ENCODE measurements at regions of chr6 and their contacts with region 1.

Region 1: GRCh38 chr6:72411872-72412708 is 209.8 kb upstream of the KCNQ5 start:
- DNase-seq: peak; percentile 72
- H3K4me3 ChIP-seq: no peak overlapping the region
- H3K27ac ChIP-seq: no peak overlapping the region
- H3K4me1 ChIP-seq: no peaks in the 10 kb centered on the region
- H3K27me3 ChIP-seq: no peaks in the 10 kb centered on the region
- CTCF ChIP-seq: peak in 4 of 5 experiments; percentile 99 to 100 (median 100)
- EP300 ChIP-seq: no peak
- POLR2A ChIP-seq: no peak

Region 2: DNA sequence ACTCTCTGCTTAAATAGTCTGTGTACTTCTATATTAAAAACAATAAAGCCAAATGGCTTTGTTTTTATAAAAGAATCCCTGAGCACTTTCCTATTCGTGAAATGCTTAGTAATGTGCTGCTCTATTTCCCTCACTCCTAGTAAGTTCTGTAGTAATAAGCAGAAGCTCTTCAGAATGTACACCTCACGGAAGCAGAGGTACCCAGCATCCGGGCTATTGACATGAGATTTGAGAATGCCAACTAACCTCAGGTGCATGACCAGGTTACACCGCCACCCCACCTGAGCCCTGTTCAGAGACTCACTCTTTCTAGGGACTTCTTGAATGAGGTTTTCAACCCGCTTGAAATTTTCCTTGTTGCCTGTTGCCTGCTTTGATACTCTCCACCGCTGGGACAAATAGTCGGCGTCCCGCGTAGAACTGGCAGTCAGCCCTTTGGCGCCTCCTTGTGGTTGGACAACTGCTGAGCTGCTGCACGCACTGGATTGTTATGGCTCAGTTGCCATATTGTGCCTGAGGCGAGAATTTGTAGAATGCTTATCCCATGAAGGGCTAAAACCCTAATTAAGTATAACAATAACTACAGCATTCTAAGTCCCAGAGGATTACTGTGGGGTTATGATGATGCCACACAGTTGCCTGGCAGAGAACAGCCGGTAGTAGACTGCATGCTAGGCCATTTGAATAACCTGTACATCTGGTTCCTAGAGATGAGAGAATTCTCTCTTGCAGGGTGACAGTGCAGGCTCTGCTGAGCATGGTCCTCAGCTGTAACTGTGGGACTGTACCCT is 717.8 kb after region 1 on chr6:
- in situ Hi-C with region 1: loop called (anchors 10 to 25 kb)
- intact Hi-C with region 1: loop called (anchors 10 kb)
- DNase-seq: peak; percentile 75
- H3K4me3 ChIP-seq: no peak overlapping the region
- H3K27ac ChIP-seq: no peak overlapping the region
- H3K4me1 ChIP-seq: no peaks in the 10 kb centered on the region
- H3K27me3 ChIP-seq: no peaks in the 10 kb centered on the region
- CTCF ChIP-seq: peak; percentile 76 to 90 (median 86)
- EP300 ChIP-seq: no peak
- POLR2A ChIP-seq: no peak

Region 3: GRCh38 chr6:73339347-73339746 is 927.3 kb after region 1 on chr6:
- in situ Hi-C with region 1: loop called in 1 of 4 experiments (anchors 25 kb)
- intact Hi-C with region 1: no loop called
- DNase-seq: no peak
- H3K4me3 ChIP-seq: no peak overlapping the region
- H3K27ac ChIP-seq: no peak overlapping the region
- H3K4me1 ChIP-seq: no peaks in the 10 kb centered on the region
- H3K27me3 ChIP-seq: no peaks in the 10 kb centered on the region
- CTCF ChIP-seq: no peak
- EP300 ChIP-seq: no peak
- POLR2A ChIP-seq: no peak